ENCODE measurements at regions of chrX and their contacts with region 1.

Region 1: GRCh38 chrX:2584251-2585157 is 83.7 kb upstream of the DHRSX start:
- DNase-seq: no peak
- H3K4me3 ChIP-seq: no peak overlapping the region
- CTCF ChIP-seq: no peak
- POLR2A ChIP-seq: no peak

Region 2: DNA sequence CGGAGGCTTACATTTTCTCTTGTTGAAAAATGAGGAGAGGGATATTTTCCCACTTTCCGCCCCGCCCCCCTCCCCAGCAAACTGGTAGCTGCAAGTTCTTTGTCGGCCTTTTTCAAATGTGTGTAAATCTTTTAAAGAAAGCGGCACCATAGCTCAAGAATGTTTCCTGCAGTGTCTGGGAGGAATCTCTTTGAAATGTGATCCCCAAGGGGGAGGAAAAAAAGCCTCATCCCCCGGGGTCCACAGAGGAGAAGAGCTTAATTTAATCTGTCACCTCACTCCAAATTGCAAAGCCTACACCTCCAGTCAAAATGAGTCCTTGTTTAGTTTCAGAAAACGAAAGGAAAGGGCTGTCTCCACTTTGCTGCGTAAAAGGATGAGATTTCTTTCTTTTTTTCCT is 934.9 kb before region 1 on chrX:
- intact Hi-C with region 1: loop called (anchors 5 kb)
- DNase-seq: no peak
- H3K4me3 ChIP-seq: no peak overlapping the region
- CTCF ChIP-seq: no peak
- POLR2A ChIP-seq: no peak

Region 3: DNA sequence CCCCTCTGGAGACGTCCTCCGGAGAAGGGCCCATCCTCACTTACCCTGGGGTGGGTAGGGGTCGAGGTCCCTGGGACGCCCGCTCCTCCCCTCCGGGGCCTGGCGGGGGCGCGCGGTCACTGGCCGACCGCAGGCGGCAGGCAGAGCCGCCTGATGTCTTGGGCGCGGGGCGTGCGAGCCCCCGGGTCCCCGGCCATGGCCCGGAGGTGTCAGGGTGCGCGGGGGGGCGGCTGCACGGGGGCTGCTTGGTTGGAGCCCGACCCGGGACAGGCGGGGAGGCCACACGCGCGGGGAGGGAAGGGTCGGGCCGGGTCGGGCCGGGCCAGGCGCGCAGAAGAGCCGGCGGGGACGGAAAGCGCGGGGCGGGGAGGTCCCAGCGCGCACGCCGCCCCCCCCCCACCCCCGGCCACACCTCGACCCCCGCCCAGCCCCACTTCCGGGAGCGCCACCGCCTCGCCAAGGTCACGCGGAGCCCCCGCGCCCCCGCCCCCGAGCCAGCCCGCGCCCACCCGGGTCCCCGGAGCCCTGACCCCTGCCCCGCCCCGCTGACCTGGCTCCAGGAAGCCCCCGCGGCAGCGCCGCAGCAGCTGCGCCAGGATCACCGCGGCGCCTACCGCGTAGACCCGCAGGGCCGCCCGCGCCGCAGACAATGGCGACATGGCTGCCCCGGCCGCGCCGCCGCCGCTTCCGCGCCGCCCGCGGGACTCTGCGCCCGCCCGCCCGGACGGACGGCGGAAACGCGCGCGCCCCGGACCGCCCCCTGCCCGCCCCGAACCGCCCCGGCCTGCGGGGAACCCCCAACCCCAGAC is 84.0 kb before region 1 on chrX and contains the starts of genes DHRSX and ZBED1:
- intact Hi-C with region 1: no loop called
- DNase-seq: peak in 1 of 2 donors; percentile 85
- H3K4me3 ChIP-seq: peak within 1 kb of the TSS; percentile 85
- CTCF ChIP-seq: no peak
- POLR2A ChIP-seq: no peak
- total RNA-seq, gene DHRSX: 10.9 to 21.7 (median 16.2) TPM
- total RNA-seq, gene ZBED1: 42.4 to 76.4 (median 56.5) TPM

Region 4: DNA sequence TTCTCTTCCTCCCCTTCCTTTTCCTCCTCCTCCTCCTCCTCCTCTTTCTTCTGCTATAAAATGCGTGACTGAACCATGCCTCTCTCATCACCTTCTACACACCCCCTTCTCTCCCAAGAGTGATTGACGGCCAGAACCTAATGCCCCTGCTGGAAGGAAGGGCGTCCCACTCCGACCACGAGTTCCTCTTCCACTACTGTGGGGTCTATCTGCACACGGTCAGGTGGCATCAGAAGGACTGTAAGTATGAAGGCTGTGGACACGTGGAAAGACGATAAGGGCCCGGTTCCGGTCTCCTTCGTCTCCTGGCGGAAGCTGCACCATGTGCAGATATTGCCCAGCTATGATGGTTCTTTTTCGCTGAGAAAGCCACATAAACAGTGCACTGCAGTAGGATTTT is 444.6 kb after region 1 on chrX:
- intact Hi-C with region 1: no loop called
- DNase-seq: peak in 1 of 2 donors; percentile 14
- H3K4me3 ChIP-seq: no peak overlapping the region
- CTCF ChIP-seq: no peak
- POLR2A ChIP-seq: no peak

Measured in lower leg skin (tissue), 4 donors.